GM12878 (cell line): ENCODE measurements at regions of chr10 and their contacts with region 1.

Region 1: DNA sequence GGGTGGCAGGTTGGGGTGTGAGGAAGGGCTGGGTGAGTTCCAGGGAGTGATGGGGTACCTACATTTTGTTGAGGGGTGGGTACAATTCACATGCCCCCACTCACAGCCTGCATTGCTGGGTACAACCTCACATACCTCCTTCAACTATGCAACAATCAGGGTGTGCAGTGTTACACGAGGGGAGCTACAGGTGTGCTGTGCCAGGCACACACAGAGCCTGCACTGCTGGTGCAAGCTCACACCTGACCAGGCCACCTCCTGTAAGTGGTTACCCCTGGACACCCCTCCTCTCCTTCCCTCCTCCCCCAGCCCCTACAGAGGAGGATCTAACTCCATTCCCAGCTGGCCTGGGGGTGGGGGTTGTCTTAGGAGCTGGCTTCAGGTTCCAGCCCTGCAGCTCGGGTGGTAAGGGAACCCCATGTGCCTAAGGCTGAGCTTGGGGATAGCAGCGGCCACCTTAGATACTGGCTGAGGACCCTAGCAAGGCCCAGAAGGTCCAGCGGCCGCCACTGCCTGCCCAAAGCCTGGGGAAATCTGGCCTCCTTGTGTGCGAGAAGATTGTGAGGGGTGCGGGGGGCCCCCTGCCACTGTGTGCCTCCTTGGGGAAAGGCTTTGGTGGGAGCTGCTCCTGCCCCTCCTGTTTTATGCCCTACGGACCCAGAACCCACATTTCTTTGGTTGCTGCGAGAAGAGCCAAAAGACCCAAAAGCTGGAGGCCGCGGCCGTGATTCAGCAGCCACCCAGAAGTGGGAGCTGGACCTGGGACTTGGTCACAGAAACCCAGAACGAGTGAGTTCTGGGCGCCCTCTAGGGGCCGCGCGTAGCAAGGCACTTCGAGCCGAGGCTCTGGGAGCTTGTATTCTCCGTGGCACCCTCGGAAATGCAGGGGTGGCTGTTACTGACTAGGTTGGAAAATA is 10.8 kb downstream of the TLX1 start:
- DNase-seq: peak; percentile 4
- ATAC-seq: peak; percentile 97
- H3K4me3 ChIP-seq: no peak overlapping the region
- H3K27ac ChIP-seq: no peak overlapping the region
- H3K4me1 ChIP-seq: no peaks in the 10 kb centered on the region
- H3K27me3 ChIP-seq: peaks cover 24 to 25% of the 10 kb centered on the region in 2 experiments
- CTCF ChIP-seq: peak; percentile 85 to 97 (median 97)
- EP300 ChIP-seq: no peak
- POLR2A ChIP-seq: no peak
- RAD21 ChIP-seq: peak; percentile 80

Region 2: DNA sequence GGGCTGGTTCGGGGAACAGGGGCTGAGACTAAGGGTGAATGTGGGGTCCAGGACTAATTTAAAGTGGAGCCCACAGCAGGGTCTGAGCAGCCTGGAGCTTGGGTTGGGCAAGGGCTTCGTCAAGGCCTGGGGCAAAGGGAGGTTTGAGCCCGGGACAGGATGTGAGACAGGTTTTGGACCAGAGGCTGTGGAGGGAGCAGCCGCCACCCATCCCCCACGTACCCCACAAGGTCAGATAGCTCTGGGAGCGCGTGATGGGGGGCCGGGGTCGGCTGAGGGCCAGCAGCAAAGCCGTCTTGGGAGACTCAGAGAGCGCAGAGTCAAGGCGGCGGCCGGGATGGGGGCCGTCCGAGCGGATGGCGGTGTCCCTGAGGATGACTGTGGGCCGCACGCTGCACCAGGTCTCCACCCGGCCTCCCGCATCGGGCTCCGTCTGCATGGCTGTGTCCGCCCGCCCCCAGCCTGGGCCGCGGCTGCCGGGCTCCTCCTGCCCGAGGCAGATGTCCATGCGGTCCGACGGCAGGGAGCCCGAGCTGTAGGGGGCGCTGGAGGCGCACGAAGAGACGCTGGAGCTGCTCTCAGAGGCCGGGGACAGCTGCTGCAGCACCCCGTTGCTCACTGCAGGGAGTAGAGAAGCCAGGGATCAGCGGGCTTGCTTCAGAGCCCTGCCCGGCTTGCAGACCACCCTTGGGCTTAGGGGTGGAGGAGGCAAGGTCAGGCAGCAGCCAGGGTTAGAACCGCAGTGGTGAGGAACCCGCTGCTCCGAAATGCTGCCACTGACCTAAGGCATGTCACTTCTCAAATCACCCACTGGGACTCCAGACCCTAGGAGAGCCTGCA is 123.1 kb before region 1 on chr10:
- CTCF ChIA-PET with region 1: interaction called, 14 read pairs
- POLR2A ChIA-PET with region 1: no interaction called
- RAD21 ChIA-PET with region 1: interaction called, 11 read pairs
- SMC1A ChIA-PET with region 1: interaction called, 5 read pairs
- in situ Hi-C with region 1: no loop called
- intact Hi-C with region 1: no loop called
- DNase-seq: no peak
- ATAC-seq: peak; percentile 87
- H3K4me3 ChIP-seq: no peak overlapping the region
- H3K27ac ChIP-seq: no peak overlapping the region
- H3K4me1 ChIP-seq: peaks cover 9% of the 10 kb centered on the region
- H3K27me3 ChIP-seq: peaks cover 10% of the 10 kb centered on the region in 2 experiments
- CTCF ChIP-seq: peak; percentile 61 to 77 (median 61)
- EP300 ChIP-seq: no peak
- POLR2A ChIP-seq: no peak
- RAD21 ChIP-seq: peak; percentile 43; the same call in 1 of the 2 replicates

Region 3: DNA sequence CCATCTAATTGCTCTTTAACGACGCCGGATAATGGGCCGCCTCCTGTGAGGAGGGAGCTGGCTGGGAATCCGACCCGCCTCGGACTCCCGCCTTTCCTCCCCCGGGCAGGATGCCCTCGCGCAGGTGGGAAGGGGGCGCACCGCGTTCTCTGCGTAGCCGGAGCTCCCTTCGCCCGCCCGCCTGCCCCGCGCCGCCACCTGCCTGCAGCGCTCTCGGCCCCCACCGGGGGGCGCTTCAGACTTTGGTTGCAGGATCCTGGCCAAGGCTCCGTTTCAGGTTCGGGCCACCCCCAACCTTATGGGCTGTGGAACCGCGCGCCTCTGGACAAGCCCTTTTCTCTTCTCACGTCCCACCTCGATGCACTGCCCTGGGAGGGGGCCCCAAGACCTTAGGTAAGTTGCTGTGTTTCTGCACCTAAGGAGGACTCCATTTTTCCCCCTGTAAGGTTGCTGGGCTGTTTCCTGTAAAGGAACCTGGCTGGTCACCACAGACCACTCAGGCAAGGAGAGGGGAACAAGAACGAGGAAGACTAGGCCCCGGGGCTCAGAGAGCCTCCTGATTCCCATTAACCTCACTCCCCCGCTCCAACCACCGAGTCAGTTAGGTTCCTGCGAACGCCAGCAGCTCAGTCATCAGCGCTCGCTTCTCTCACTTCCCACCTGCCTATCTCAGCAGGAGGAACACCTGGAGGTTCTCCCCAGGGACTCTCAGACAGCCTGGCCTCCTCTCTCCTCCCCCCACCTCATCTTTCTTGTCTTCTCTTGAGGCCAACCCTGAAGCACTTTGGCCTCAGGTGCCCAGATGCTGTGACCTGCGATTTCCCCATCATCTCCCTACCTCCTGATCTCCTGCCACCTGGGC is 91.4 kb before region 1 on chr10:
- CTCF ChIA-PET with region 1: interaction called, 49 read pairs
- POLR2A ChIA-PET with region 1: interaction called, 3 read pairs
- RAD21 ChIA-PET with region 1: interaction called, 20 read pairs
- SMC1A ChIA-PET with region 1: interaction called, 19 read pairs
- in situ Hi-C with region 1: no loop called
- intact Hi-C with region 1: no loop called
- DNase-seq: no peak
- ATAC-seq: peak; percentile 97
- H3K4me3 ChIP-seq: peak overlapping the region; percentile 56; the same call in 1 of the 2 replicates
- H3K27ac ChIP-seq: no peak overlapping the region
- H3K4me1 ChIP-seq: peaks cover 8% of the 10 kb centered on the region
- H3K27me3 ChIP-seq: peaks cover 0 to 1% of the 10 kb centered on the region in 2 experiments; a peak in 2 of 4 replicates
- CTCF ChIP-seq: peak; percentile 85 to 88 (median 87)
- EP300 ChIP-seq: no peak
- POLR2A ChIP-seq: no peak
- RAD21 ChIP-seq: peak; percentile 65

Region 4: GRCh38 chr10:101067356-101068083 is 74.4 kb before region 1 on chr10:
- CTCF ChIA-PET with region 1: interaction called, 29 read pairs
- POLR2A ChIA-PET with region 1: no interaction called
- RAD21 ChIA-PET with region 1: interaction called, 8 read pairs
- SMC1A ChIA-PET with region 1: interaction called, 5 read pairs
- in situ Hi-C with region 1: no loop called
- intact Hi-C with region 1: no loop called
- DNase-seq: peak; percentile 44
- ATAC-seq: peak; percentile 74
- H3K4me3 ChIP-seq: peak overlapping the region; percentile 87
- H3K27ac ChIP-seq: no peak overlapping the region
- H3K4me1 ChIP-seq: peaks cover 41% of the 10 kb centered on the region
- H3K27me3 ChIP-seq: peaks cover 2 to 3% of the 10 kb centered on the region in 2 experiments; a peak in 1 of 4 replicates
- CTCF ChIP-seq: peak; percentile 81 to 89 (median 82)
- EP300 ChIP-seq: no peak
- POLR2A ChIP-seq: no peak
- RAD21 ChIP-seq: peak; percentile 73

Region 5: GRCh38 chr10:101095542-101096213 is 46.2 kb before region 1 on chr10:
- CTCF ChIA-PET with region 1: interaction called, 231 read pairs
- POLR2A ChIA-PET with region 1: no interaction called
- RAD21 ChIA-PET with region 1: interaction called, 93 read pairs
- SMC1A ChIA-PET with region 1: interaction called, 72 read pairs
- in situ Hi-C with region 1: loop called (anchors 5 kb)
- intact Hi-C with region 1: loop called (anchors 1 kb)
- DNase-seq: peak; percentile 52
- ATAC-seq: peak; percentile 99
- H3K4me3 ChIP-seq: no peak overlapping the region
- H3K27ac ChIP-seq: no peak overlapping the region
- H3K4me1 ChIP-seq: no peaks in the 10 kb centered on the region
- H3K27me3 ChIP-seq: peaks cover 0 to 1% of the 10 kb centered on the region in 2 experiments; a peak in 3 of 4 replicates
- CTCF ChIP-seq: peak; percentile 80 to 91 (median 91)
- EP300 ChIP-seq: no peak
- POLR2A ChIP-seq: no peak
- RAD21 ChIP-seq: peak; percentile 59

Region 6: GRCh38 chr10:101152316-101152715 is 10.4 kb after region 1 on chr10:
- CTCF ChIA-PET with region 1: interaction called, 19 read pairs
- POLR2A ChIA-PET with region 1: no interaction called
- RAD21 ChIA-PET with region 1: interaction called, 5 read pairs
- SMC1A ChIA-PET with region 1: no interaction called
- in situ Hi-C with region 1: no loop called
- intact Hi-C with region 1: no loop called
- DNase-seq: no peak
- ATAC-seq: no peak
- H3K4me3 ChIP-seq: no peak overlapping the region
- H3K27ac ChIP-seq: no peak overlapping the region
- H3K4me1 ChIP-seq: no peaks in the 10 kb centered on the region
- H3K27me3 ChIP-seq: peaks cover 4 to 9% of the 10 kb centered on the region in 2 experiments
- CTCF ChIP-seq: no peak
- EP300 ChIP-seq: no peak
- POLR2A ChIP-seq: no peak
- RAD21 ChIP-seq: no peak

Region 7: DNA sequence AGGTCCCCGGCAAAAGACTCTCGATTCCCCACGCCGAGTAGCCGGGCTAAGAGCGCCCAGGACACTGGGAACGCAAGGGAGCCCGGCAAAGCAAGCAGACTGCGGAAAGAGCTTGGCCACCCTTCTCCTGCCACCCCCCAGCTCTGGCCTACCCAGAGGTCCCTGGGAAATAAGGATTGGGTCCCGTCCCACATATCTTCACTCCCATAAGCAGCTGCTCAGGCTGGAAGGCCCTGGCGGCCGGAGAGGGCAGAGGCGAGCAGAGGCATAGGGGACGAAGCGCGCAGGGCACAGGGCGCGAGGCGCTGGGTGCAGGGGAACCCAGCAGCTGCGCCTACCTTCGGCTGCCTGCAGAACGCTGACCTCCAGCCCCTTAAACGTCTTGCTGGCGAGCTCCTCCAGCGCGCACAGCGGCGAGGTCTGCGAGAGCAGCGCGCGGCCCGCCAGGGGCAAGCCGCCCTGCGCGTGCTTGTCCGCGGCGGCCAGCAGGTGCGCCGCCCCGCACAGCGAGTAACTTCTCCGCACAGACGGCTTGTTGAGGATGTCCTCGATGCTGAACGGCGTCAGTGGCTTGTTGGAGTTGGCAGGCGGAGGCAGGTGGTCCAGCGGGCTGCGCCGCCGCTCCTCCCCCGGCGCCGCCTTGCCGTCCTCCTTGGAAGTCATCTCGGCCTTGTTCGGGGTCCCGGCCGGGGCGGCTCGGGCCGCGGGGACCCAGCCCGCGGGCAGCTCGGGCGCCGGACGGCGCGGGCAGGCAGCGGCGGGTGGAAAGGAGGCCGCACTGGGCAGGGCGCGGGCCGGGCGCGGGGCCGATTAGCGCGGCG is 86.5 kb after region 1 on chr10:
- CTCF ChIA-PET with region 1: no interaction called
- POLR2A ChIA-PET with region 1: no interaction called
- RAD21 ChIA-PET with region 1: no interaction called
- SMC1A ChIA-PET with region 1: no interaction called
- in situ Hi-C with region 1: no loop called
- intact Hi-C with region 1: no loop called
- DNase-seq: no peak
- ATAC-seq: no peak
- H3K4me3 ChIP-seq: no peak overlapping the region
- H3K27ac ChIP-seq: no peak overlapping the region
- H3K4me1 ChIP-seq: no peaks in the 10 kb centered on the region
- H3K27me3 ChIP-seq: peaks cover 33 to 50% of the 10 kb centered on the region in 2 experiments
- CTCF ChIP-seq: no peak
- EP300 ChIP-seq: no peak
- POLR2A ChIP-seq: no peak
- RAD21 ChIP-seq: no peak